ENCODE measurements at regions of chr10 and their contacts with region 1.

Region 1: DNA sequence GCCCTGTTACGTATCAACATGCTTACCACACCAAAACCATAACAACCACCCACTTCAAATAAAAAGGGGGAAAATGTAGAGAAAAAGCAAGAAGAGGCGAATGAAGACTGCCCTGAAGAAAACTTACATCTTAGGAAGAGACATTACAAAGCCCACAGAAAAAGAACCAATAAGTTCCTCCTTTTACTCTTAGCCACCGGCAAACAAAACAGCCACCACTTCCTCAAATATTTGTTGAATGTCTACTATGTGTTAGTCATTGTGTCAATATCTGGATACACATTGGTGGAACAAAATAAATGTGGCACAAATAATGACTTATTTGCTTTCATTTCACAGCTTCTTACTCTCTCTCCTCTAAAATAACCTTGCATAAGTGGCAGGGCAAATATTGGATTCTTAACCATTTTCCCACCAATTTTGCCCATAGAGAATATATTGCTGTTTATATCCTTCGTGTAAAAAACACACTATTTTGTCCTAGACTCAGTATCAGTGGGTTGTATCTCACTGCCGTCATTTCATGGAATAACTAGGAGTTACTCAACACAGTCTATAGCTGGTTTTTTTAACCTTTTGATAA is 106.8 kb downstream of the ANK3 start:
- DNase-seq: peak; percentile 99
- ATAC-seq: peak; percentile 88
- H3K4me3 ChIP-seq: peak overlapping the region; percentile 55
- H3K27ac ChIP-seq: peak overlapping the region; percentile 93
- H3K4me1 ChIP-seq: peaks cover 46% of the 10 kb centered on the region
- H3K27me3 ChIP-seq: no peaks in the 10 kb centered on the region
- CTCF ChIP-seq: no peak

Region 2: GRCh38 chr10:60237977-60238758 is 44.7 kb before region 1 on chr10:
- CTCF ChIA-PET with region 1: interaction called, 8 read pairs
- POLR2A ChIA-PET with region 1: no interaction called
- intact Hi-C with region 1: loop called (anchors 1 kb)
- DNase-seq: peak; percentile 89
- ATAC-seq: peak; percentile 99
- H3K4me3 ChIP-seq: peak overlapping the region; percentile 66
- H3K27ac ChIP-seq: 0 out of 2 replicates have a peak overlapping the region, but pooled peaks have one; percentile 3
- H3K4me1 ChIP-seq: peaks cover 25% of the 10 kb centered on the region
- H3K27me3 ChIP-seq: no peaks in the 10 kb centered on the region
- CTCF ChIP-seq: peak; percentile 96

Region 3: GRCh38 chr10:60252688-60253087 is 30.2 kb before region 1 on chr10:
- CTCF ChIA-PET with region 1: no interaction called
- POLR2A ChIA-PET with region 1: no interaction called
- intact Hi-C with region 1: no loop called
- DNase-seq: no peak
- ATAC-seq: no peak
- H3K4me3 ChIP-seq: no peak overlapping the region
- H3K27ac ChIP-seq: no peak overlapping the region
- H3K4me1 ChIP-seq: no peaks in the 10 kb centered on the region
- H3K27me3 ChIP-seq: no peaks in the 10 kb centered on the region
- CTCF ChIP-seq: no peak

Region 4: DNA sequence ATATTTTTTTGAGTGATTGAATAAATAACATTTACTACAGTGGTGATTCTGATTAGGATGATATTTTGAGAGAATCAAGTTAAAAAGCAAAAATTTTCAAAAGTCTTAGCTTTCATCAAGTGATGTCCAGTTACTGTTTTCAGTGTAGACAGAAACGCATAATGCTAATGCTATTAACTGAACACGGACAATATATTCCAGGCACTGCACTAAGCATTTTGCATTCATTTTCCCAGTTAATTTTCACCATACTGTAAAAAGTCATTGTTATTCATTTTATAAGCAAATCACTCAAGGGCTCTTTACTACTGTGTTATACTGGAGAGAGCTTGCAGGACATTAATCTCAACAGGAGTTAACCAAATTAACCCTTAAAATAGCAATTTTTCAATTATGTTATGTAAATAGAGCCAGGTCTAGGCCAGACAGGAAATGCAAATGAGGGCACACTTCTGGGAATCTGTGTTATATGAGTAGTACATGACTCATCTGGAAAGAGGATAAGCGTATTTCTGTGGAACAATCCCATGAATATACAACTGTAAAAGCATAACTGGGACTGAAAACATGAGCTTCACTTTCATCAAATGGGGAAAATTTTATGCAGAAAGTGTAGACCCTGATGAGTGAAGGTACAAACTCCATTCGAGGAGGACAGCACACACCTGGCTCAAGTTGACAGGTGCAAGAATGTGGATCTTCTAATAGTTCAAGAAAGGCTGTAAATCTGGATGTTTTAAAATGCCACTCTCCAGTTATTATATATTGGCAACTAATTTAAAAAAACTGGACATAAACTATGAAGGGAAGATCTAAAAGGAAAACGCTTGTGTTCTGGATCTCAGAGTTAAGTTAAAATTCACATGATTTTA is 31.4 kb after region 1 on chr10:
- CTCF ChIA-PET with region 1: no interaction called
- POLR2A ChIA-PET with region 1: no interaction called
- intact Hi-C with region 1: loop called (anchors 1 kb)
- DNase-seq: peak; percentile 82
- ATAC-seq: peak; percentile 77
- H3K4me3 ChIP-seq: peak overlapping the region; percentile 11; the same call in 1 of the 2 replicates
- H3K27ac ChIP-seq: peak overlapping the region; percentile 76
- H3K4me1 ChIP-seq: peaks cover 36% of the 10 kb centered on the region
- H3K27me3 ChIP-seq: no peaks in the 10 kb centered on the region
- CTCF ChIP-seq: no peak

Region 5: DNA sequence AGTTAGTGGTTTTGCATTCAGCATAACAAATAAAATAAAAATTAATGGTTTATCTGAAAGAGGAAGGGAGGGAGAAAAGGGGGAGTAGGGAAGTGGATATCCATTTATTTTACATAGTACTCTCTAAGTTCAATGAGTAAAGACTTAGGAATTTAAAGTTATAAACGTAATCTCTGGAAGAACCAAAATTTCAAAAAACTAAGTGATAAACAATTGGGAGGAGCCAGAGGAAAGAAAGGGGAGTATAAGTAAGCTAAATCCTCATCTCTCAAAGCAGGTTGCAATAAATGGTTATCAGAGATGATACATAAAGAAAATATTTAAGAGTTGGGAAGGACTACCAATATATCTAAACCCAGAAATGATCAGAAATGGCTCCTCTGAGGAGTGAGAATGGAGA is 60.4 kb after region 1 on chr10:
- CTCF ChIA-PET with region 1: no interaction called
- POLR2A ChIA-PET with region 1: no interaction called
- intact Hi-C with region 1: loop called (anchors 1 kb)
- DNase-seq: peak; percentile 59
- ATAC-seq: peak; percentile 72
- H3K4me3 ChIP-seq: no peak overlapping the region
- H3K27ac ChIP-seq: no peak overlapping the region
- H3K4me1 ChIP-seq: peaks cover 18% of the 10 kb centered on the region
- H3K27me3 ChIP-seq: no peaks in the 10 kb centered on the region
- CTCF ChIP-seq: no peak

Region 6: DNA sequence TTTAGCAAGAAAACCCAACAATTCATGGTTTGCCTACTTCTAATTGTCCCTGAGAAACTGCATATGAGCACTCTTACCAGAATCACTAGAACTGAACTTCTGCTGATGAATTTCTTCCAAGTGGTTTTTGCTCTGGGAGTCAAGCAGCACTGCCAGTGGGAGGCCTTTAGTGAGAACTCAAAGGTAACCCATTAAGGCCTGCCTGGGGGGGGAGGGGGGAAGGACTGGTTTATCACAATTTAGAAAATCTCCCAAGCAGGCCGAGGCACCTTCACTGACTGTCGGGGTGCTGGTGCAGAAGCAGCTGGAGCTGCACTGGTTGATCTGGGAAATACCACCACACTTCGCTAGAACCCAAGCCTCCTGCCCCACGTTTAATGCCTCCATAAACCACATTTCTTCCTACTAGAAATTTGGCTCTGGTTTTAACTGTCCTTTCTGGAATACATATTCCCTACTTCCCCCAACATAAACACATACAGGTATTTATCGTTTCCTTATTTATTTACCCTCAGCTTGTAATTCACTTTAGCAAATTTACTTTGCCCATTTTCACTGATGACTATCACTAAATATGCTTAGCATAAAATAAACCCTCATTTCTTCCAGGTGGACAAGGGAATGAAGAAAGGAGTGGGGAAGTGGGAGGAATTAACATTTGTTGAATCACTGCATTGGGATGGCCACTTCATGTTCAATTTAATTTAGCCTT is 92.6 kb after region 1 on chr10:
- CTCF ChIA-PET with region 1: no interaction called
- POLR2A ChIA-PET with region 1: no interaction called
- intact Hi-C with region 1: loop called (anchors 2 kb)
- DNase-seq: peak; percentile 64
- ATAC-seq: peak; percentile 90
- H3K4me3 ChIP-seq: no peak overlapping the region
- H3K27ac ChIP-seq: no peak overlapping the region
- H3K4me1 ChIP-seq: peaks cover 26% of the 10 kb centered on the region
- H3K27me3 ChIP-seq: no peaks in the 10 kb centered on the region
- CTCF ChIP-seq: no peak

Region 7: GRCh38 chr10:60384708-60385398 is 102.0 kb after region 1 on chr10:
- CTCF ChIA-PET with region 1: no interaction called
- POLR2A ChIA-PET with region 1: no interaction called
- intact Hi-C with region 1: loop called (anchors 1 kb)
- DNase-seq: peak; percentile 100
- ATAC-seq: peak; percentile 89
- H3K4me3 ChIP-seq: peak overlapping the region; percentile 16; the same call in 1 of the 2 replicates
- H3K27ac ChIP-seq: peak overlapping the region; percentile 78
- H3K4me1 ChIP-seq: peaks cover 65% of the 10 kb centered on the region
- H3K27me3 ChIP-seq: no peaks in the 10 kb centered on the region
- CTCF ChIP-seq: no peak

Region 8: DNA sequence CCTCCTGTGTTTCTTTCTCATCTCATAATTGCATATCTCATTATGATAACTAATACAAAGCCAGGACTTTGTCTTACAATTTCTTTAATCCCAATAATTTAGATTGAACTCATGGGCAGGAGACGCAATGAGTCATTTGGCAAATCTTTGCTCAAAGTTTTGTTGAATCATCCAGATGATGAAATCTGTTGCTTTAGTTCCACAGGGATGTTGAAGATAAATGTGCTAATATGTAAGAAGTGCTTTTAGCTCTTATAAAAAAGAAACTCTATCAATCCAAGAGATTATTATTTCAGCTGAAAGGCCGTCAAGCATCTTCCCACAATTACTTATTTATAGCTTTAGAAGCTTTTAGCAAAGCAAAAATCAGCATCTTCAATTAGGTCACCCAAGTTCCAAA is 143.5 kb after region 1 on chr10:
- CTCF ChIA-PET with region 1: interaction called, 6 read pairs
- POLR2A ChIA-PET with region 1: no interaction called
- intact Hi-C with region 1: loop called (anchors 1 kb)
- DNase-seq: peak; percentile 98
- ATAC-seq: peak; percentile 30
- H3K4me3 ChIP-seq: 0 out of 2 replicates have a peak overlapping the region, but pooled peaks have one; percentile 5
- H3K27ac ChIP-seq: peak overlapping the region; percentile 93
- H3K4me1 ChIP-seq: peaks cover 92% of the 10 kb centered on the region
- H3K27me3 ChIP-seq: no peaks in the 10 kb centered on the region
- CTCF ChIP-seq: no peak

Region 9: GRCh38 chr10:60848126-60848525 is 565.3 kb after region 1 on chr10:
- CTCF ChIA-PET with region 1: no interaction called
- POLR2A ChIA-PET with region 1: no interaction called
- intact Hi-C with region 1: no loop called
- DNase-seq: peak; percentile 43
- ATAC-seq: no peak
- H3K4me3 ChIP-seq: no peak overlapping the region
- H3K27ac ChIP-seq: no peak overlapping the region
- H3K4me1 ChIP-seq: peaks cover 9% of the 10 kb centered on the region
- H3K27me3 ChIP-seq: no peaks in the 10 kb centered on the region
- CTCF ChIP-seq: no peak